PC-3 (cell line): ENCODE measurements at regions of chr16 and their contacts with region 1.

Region 1: DNA sequence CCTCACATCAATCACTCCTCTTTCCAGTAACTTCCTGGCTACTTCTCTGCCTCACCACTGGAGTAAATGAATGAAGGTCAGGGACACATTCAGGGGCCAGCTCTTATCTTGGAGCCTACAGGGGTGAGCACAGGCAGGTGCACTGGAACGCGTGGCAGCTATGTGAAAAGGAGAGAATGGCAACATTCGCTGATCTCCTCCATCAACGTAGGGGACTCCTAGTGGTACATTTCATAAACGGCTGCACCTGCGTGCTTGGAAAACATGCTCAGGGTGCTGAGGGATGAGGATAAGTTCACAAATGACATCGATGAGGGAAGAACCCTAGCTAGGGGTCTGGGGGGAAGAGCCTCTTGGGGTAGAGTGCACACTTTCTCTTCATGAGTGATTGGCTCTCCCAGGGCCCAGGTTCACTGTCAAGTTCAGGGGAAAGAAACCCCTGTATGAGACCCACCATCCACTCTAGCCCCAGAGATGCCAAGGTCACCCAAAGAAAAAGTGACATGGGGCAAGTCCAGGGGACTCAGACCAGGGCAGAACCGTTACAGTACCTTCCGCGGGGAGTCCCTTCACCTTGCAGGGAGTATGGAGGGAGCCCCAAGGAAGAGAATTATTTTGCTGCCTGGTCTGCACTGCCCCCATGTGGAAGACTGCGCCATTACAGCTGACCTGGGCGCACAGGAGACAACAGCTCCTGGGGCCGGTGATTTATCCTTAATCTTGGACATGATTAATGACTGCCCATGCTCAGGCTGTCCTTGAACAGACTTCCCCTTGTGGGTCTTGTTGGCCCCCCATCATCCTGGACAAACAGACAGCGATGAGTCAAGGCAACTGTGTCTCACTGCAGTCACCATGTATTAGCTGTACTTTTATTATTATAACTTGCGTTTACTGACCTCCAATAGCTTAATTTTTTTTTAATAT is 30.1 kb downstream of the VAC14 start:
- DNase-seq: peak; percentile 76
- ATAC-seq: peak; percentile 89
- H3K4me3 ChIP-seq: no peak overlapping the region
- H3K27ac ChIP-seq: no peak overlapping the region
- H3K4me1 ChIP-seq: peaks cover 16% of the 10 kb centered on the region
- H3K27me3 ChIP-seq: no peaks in the 10 kb centered on the region
- CTCF ChIP-seq: peak; percentile 79

Region 2: DNA sequence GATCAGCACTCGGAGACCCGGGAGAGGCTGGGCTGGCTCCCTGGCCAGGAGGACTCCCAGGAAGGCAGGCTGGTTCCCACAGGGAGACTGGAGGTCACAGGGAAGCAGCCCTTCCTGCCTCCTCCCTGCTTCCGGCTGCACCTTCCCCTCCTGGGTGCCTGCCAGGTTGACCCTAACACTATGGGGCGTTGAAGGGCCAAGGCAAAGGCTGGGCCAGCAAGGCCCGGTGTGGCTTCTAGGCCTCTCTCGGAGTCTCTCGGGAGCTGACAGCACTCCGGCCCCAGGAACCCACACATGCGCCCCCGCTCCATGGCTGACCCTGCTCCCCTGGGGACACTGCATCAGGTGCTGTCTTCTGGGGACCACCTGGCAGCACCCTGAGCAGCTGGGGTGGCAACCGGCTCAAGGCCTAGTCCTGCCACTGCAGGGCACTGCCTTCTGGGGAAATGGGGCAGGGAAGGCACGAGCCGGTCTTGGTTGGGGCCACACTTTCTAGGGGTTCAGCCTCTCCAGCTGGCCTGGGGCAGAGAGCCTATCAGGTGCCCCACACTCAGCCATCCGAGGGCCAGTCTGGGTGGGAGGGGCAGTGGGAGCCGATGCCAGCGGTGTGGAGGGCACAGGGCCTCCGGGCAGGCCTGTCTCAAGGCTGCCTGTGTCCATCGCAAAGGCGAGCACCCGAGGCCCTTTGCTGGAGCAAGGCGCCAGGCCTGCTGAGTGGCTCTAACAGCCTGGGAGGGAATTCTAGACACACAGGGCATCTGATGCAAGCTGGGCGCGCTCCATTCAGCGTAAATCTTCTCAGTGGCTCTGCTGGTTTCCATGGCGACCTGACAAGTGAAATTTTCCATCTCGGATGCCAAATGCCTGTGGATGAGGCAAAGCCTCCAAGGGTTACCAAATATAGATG is 79.4 kb before region 1 on chr16:
- CTCF ChIA-PET with region 1: interaction called, 6 read pairs
- POLR2A ChIA-PET with region 1: no interaction called
- intact Hi-C with region 1: loop called (anchors 10 kb)
- DNase-seq: no peak
- ATAC-seq: no peak
- H3K4me3 ChIP-seq: no peak overlapping the region
- H3K27ac ChIP-seq: no peak overlapping the region
- H3K4me1 ChIP-seq: peaks cover 38% of the 10 kb centered on the region
- H3K27me3 ChIP-seq: no peaks in the 10 kb centered on the region
- CTCF ChIP-seq: no peak

Region 3: GRCh38 chr16:70715055-70715858 is 55.6 kb before region 1 on chr16:
- CTCF ChIA-PET with region 1: interaction called, 5 read pairs
- POLR2A ChIA-PET with region 1: no interaction called
- intact Hi-C with region 1: loop called (anchors 2 kb)
- DNase-seq: peak; percentile 98
- ATAC-seq: peak; percentile 95
- H3K4me3 ChIP-seq: peak overlapping the region; percentile 49; the same call in 1 of the 2 replicates
- H3K27ac ChIP-seq: peak overlapping the region; percentile 92
- H3K4me1 ChIP-seq: peaks cover 26% of the 10 kb centered on the region
- H3K27me3 ChIP-seq: no peaks in the 10 kb centered on the region
- CTCF ChIP-seq: peak; percentile 32; the same call in 1 of the 2 replicates

Region 4: DNA sequence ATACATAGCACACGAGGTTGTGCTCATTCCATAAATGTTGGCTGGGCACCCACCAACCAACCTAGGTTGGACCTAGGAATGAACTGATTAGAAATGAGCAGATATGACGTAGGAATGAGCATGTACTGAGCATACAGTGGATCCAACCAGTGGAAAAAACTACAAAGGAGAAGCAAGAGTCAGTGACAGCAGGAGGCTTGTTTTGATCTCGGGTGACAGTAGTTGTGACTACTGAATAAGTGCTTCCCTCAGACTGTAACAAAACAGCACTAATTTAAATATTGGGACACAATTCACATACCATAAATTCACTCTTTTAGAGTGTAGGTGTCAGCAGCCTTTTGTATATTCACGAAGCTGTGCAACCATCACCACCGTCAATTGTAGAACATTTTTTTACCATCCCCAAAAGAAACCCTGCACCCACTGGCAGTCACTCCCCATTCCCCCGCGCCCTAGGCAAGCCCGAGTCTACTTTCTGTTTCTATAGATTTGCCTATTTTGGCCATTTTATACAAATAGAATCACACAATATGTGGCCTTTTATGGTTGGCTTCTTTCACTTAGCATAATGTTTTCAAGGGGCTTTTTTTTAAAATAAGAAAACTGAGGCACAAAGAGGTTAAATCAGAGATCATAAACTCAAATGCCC is 23.1 kb after region 1 on chr16:
- CTCF ChIA-PET with region 1: no interaction called
- POLR2A ChIA-PET with region 1: no interaction called
- intact Hi-C with region 1: no loop called
- DNase-seq: no peak
- ATAC-seq: no peak
- H3K4me3 ChIP-seq: no peak overlapping the region
- H3K27ac ChIP-seq: no peak overlapping the region
- H3K4me1 ChIP-seq: peaks cover 1% of the 10 kb centered on the region; the same call in 1 of the 2 replicates
- H3K27me3 ChIP-seq: no peaks in the 10 kb centered on the region
- CTCF ChIP-seq: no peak